HEK293 (cell line): ENCODE measurements at regions of chr4 and their contacts with region 1.

Region 1: GRCh38 chr4:38804654-38805295 is at the start of gene TLR1:
- H3K4me3 ChIP-seq: no peak within 1 kb of the TSS
- H3K27ac ChIP-seq: no peak within 1 kb of the TSS
- H3K4me1 ChIP-seq: no peaks in the 10 kb centered on the region
- CTCF ChIP-seq: no peak

Region 2: GRCh38 chr4:38782452-38783108 is 22.2 kb before region 1 on chr4 and contains the start of gene TLR10:
- CTCF ChIA-PET with region 1: interaction called, 14 read pairs
- POLR2A ChIA-PET with region 1: no interaction called
- H3K4me3 ChIP-seq: no peak within 1 kb of the TSS
- H3K27ac ChIP-seq: no peak within 1 kb of the TSS
- H3K4me1 ChIP-seq: no peaks in the 10 kb centered on the region
- CTCF ChIP-seq: no peak

Region 3: GRCh38 chr4:38791010-38791409 is 13.8 kb before region 1 on chr4:
- CTCF ChIA-PET with region 1: interaction called, 13 read pairs
- POLR2A ChIA-PET with region 1: no interaction called
- H3K4me3 ChIP-seq: no peak overlapping the region
- H3K27ac ChIP-seq: no peak overlapping the region
- H3K4me1 ChIP-seq: no peaks in the 10 kb centered on the region
- CTCF ChIP-seq: no peak